ENCODE measurements at regions of chr11 and their contacts with region 1.

Region 1: DNA sequence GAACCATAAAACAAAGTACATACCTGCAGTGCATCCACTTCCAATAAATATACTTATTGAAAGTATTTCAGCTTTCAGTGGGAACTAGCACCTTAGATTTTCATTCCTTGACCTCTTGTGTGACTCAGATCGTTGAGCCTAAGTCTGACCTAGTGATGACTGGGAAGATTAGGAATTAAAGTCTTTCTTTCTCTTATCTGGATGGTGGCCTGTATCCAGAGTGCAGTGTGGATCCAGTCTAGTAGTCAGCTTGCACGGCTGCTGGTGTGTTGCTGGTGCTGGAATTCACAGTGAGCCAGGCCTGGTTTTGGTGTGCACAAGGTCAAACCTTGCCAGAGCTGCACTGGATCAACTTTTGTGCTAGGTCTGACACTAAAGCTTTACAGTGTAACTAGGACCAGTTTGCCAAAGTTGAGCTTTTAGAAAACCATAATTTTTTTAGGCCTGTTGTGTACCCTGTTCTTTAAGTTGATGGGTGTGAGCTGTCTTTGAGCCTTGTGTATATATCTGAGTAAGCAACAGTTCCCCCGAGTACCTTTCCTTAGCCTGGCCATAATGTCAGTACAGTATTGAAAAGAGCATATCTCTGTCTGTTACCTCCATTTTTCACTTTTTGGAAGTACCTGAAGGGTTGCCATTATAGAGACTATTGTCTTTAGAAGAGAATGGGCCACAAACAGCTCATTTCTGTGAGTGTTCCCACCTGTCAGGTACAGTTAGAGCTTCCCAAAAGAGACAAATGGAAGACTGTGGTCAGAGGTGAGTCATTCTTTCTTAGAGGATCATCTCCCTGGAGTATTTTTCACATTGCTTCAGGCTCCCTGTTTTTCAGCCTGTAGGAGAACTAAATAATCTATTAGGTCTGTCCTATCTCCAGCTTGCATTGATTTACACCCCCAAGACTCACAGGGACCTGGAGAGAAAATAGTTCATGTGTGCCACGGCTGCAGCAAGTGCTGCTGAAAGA is 89.8 kb downstream of the ALX4 start:
- DNase-seq: no peak

Region 2: GRCh38 chr11:45638051-45638450 is 1417.9 kb after region 1 on chr11:
- intact Hi-C with region 1: loop called in 1 of 2 experiments (anchors 5 kb)
- DNase-seq: no peak